ENCODE measurements at regions of chr22 and their contacts with region 1.

Region 1: DNA sequence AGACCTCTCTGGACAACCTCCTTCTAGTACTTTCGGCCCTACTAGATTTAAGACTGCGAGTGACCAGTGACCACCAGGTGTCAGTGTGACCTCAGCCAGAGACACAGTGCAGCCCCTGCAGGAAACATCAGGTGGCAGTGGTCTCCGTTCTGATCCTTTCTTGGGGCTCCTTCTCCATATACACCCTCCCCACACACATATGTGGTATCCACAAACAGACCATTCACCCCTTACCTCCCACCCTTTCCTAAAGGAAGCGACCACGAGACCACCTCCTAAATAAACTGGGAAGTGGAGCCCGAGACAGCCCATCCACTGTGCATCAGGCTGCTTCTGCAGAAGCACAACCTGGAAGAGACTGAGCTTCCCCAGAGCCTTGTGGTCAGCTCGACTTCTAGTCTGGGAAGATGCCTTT is 38.5 kb upstream of the CYP2D6 start:
- DNase-seq: peak; percentile 51 to 82 (median 74)
- ATAC-seq: peak; percentile 95
- H3K4me3 ChIP-seq: no peak overlapping the region
- H3K4me3 Mint-ChIP-seq: no peak overlapping the region
- H3K27ac ChIP-seq: no peak overlapping the region
- H3K27ac Mint-ChIP-seq: no peak overlapping the region
- H3K4me1 ChIP-seq: peaks cover 3% of the 10 kb centered on the region
- H3K4me1 Mint-ChIP-seq: peaks cover 36% of the 10 kb centered on the region
- H3K27me3 ChIP-seq: no peaks in the 10 kb centered on the region
- H3K27me3 Mint-ChIP-seq: no peaks in the 10 kb centered on the region
- CTCF ChIP-seq: peak; percentile 94

Region 2: DNA sequence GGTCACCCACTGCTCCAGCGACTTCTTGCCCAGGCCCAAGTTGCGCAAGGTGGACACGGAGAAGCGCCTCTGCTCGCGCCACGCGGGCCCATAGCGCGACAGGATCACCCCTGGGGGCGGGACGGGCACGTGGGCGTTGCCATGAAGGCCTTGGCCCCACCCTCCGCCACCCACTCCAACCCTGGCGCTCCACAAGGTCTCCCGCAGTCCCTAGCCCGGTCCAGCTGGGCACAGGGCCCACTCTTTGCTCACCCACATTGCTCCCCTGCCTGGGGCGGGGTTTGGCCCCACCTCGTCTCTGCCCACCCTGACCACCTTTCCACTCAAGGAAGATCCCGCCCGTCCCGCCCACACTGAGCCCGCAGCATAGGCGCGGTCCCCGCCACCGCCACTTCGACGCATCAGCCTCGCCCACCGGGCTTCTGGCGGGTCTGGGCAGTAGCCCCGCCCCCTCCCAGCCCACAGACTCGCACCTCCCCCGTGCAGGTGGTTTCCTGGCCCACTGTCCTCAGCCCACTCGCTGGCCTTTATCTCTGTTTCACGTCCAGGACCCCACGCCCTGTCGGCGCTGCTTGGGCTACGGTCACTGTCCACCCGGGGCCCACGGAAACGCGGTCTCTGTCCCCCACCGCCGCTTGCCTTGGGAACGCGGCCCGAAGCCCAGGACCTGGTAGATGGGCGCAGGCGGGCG is 26.1 kb before region 1 on chr22:
- CTCF ChIA-PET with region 1: no interaction called
- POLR2A ChIA-PET with region 1: no interaction called
- intact Hi-C with region 1: no loop called
- DNase-seq: no peak
- ATAC-seq: no peak
- H3K4me3 ChIP-seq: no peak overlapping the region
- H3K4me3 Mint-ChIP-seq: no peak overlapping the region
- H3K27ac ChIP-seq: no peak overlapping the region
- H3K27ac Mint-ChIP-seq: no peak overlapping the region
- H3K4me1 ChIP-seq: no peaks in the 10 kb centered on the region
- H3K4me1 Mint-ChIP-seq: no peaks in the 10 kb centered on the region
- H3K27me3 ChIP-seq: no peaks in the 10 kb centered on the region
- H3K27me3 Mint-ChIP-seq: no peaks in the 10 kb centered on the region
- CTCF ChIP-seq: no peak

Region 3: DNA sequence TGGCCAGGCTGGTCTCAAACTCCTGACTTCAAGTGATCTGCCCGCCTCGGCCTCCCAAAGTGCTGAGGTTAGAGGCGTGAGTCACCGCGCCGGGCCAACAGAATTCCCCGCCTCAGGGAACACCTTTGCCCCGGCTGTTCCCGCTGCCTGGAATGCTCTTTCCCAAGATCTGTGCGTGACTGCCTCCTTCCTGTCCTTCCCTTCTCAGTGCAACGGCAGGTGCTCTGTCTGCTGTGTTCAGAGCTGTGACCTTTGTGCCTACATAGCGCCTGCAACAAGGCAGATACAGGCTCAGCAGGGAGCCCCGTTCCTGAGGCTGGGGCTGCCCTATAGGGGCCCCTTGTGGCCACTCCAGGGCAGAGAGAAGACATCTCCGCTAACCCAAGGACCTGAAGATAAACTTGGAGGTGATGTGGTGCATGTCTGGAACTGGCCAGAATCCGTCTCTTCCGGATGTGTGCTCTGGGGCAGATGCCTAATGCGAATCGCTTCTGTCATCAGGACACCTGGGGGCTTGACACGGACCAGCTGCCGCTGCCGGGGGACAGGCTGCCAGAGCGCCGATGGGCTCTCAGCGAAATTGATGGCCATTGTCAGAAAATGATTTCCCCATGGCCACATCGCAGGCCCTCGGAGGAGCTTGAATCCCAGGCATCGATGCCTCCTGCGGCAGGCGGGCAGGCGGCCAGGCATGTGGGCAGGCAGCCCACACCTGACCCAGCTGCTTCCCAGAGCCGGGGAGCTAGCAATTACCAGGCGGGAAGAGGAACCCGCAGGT is 144.9 kb after region 1 on chr22:
- CTCF ChIA-PET with region 1: interaction called, 5 read pairs
- POLR2A ChIA-PET with region 1: no interaction called
- intact Hi-C with region 1: loop called (anchors 1 kb)
- DNase-seq: peak in 6 of 9 experiments; percentile 33 to 71 (median 44)
- ATAC-seq: peak; percentile 50
- H3K4me3 ChIP-seq: no peak overlapping the region
- H3K4me3 Mint-ChIP-seq: no peak overlapping the region
- H3K27ac ChIP-seq: peak overlapping the region in 1 of 2 experiments; percentile 50
- H3K27ac Mint-ChIP-seq: no peak overlapping the region
- H3K4me1 ChIP-seq: peaks cover 85% of the 10 kb centered on the region
- H3K4me1 Mint-ChIP-seq: peaks cover 45% of the 10 kb centered on the region
- H3K27me3 ChIP-seq: no peaks in the 10 kb centered on the region
- H3K27me3 Mint-ChIP-seq: no peaks in the 10 kb centered on the region
- CTCF ChIP-seq: peak; percentile 32

Region 4: DNA sequence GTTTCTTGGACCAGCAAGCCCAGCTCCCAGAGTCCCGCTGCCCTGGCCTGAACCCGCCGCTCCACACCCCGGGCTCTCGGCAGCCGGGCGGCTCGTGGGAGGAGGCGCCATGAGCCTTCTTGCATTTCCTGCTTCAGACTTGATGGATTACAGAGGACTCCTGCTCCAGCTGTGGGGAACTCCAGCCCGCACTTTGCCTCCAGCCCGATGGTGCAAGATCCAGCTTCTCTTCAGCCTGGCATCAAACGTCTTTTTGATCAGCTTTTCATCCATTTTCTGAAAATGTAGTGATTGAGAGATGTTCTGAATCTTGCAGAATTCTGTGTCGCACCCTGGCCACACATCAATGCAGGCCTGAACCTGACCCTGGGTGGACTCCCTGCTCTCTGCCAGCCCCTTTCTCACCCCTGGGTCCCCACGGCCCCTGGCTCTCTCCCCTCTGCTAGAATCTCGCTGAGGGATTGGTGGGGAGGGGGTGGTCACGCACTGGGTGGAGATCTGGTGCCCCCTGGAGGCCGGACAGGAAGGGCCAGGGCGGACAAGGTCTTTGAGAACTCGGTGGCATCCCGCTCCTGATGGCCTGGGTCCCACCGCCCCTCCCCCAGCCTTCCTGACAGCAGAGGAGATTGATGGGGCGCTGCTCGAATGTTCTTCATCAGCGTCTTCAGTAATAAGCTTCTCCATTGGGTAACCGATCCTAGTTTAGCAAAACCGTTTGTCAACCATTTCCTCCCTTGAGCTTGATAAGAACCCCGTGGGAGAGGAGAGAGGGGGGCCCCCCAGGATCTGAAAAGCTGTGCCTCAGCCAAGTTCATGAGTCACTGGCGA is 275.2 kb after region 1 on chr22:
- CTCF ChIA-PET with region 1: interaction called, 63 read pairs
- POLR2A ChIA-PET with region 1: interaction called, 3 read pairs
- intact Hi-C with region 1: no loop called
- DNase-seq: peak; percentile 58 to 91 (median 78)
- ATAC-seq: peak; percentile 95
- H3K4me3 ChIP-seq: peak overlapping the region; percentile 45 to 47
- H3K4me3 Mint-ChIP-seq: peak overlapping the region; percentile 81
- H3K27ac ChIP-seq: peak overlapping the region; percentile 38 to 58
- H3K27ac Mint-ChIP-seq: peak overlapping the region; percentile 92
- H3K4me1 ChIP-seq: peaks cover 11% of the 10 kb centered on the region
- H3K4me1 Mint-ChIP-seq: peaks cover 22% of the 10 kb centered on the region
- H3K27me3 ChIP-seq: no peaks in the 10 kb centered on the region
- H3K27me3 Mint-ChIP-seq: no peaks in the 10 kb centered on the region
- CTCF ChIP-seq: peak; percentile 36

Region 5: DNA sequence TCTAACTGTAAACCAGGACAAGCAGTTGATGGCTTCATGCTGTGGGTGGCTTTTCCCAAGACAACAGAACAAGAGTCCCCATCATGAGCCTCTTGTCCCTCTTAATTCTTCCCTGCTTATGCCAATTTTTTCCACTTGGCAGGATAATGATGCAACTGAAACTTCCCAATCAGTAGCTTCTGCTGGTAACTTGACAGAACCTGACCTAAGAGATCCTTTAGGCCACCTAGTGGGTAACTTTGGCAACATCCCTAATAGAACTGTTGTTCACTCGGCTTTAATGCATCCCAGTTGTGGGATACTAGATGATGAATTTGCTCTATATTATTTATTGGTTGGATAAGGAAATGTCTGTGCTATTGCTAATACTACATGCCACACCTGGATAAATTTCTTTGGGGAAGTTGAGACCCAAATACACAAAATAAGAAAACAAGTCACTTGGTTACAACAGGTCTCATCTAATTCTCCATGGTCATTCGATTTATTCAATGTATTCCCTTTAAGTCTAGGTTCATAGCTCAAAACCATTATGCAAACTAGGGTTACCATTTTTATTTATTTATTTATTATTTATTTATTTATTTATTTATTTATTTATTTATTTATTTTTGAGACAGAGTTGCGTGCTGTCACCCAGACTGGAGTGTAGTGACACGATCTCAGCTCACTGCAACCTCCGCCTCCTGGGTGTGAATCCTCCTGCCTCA is 304.6 kb after region 1 on chr22:
- CTCF ChIA-PET with region 1: interaction called, 3 read pairs
- POLR2A ChIA-PET with region 1: no interaction called
- intact Hi-C with region 1: loop called (anchors 1 kb)
- DNase-seq: peak in 3 of 9 experiments; percentile 9 to 54 (median 38)
- ATAC-seq: no peak
- H3K4me3 ChIP-seq: no peak overlapping the region
- H3K4me3 Mint-ChIP-seq: no peak overlapping the region
- H3K27ac ChIP-seq: no peak overlapping the region
- H3K27ac Mint-ChIP-seq: no peak overlapping the region
- H3K4me1 ChIP-seq: peaks cover 9% of the 10 kb centered on the region
- H3K4me1 Mint-ChIP-seq: peaks cover 8% of the 10 kb centered on the region
- H3K27me3 ChIP-seq: no peaks in the 10 kb centered on the region
- H3K27me3 Mint-ChIP-seq: no peaks in the 10 kb centered on the region
- CTCF ChIP-seq: peak; percentile 49

Region 6: GRCh38 chr22:42553475-42554361 is 384.7 kb after region 1 on chr22 and contains the start of gene SERHL2:
- CTCF ChIA-PET with region 1: no interaction called
- POLR2A ChIA-PET with region 1: no interaction called
- intact Hi-C with region 1: loop called in 1 of 2 experiments (anchors 5 kb)
- DNase-seq: peak; percentile 61 to 93 (median 82)
- ATAC-seq: peak; percentile 95
- H3K4me3 ChIP-seq: peak within 1 kb of the TSS; percentile 54 to 81
- H3K4me3 Mint-ChIP-seq: peak within 1 kb of the TSS; percentile 81
- H3K27ac ChIP-seq: no peak within 1 kb of the TSS
- H3K27ac Mint-ChIP-seq: no peak within 1 kb of the TSS
- H3K4me1 ChIP-seq: peaks cover 12% of the 10 kb centered on the region
- H3K4me1 Mint-ChIP-seq: peaks cover 16% of the 10 kb centered on the region
- H3K27me3 ChIP-seq: no peaks in the 10 kb centered on the region
- H3K27me3 Mint-ChIP-seq: no peaks in the 10 kb centered on the region
- CTCF ChIP-seq: no peak
- total RNA-seq, gene SERHL2: 0.42 TPM in 1 of 2 experiments, not detected in the other